Posterior cingulate gyrus (tissue), 11 donors: ENCODE measurements at regions of chr1 and their contacts with region 1.

Region 1: DNA sequence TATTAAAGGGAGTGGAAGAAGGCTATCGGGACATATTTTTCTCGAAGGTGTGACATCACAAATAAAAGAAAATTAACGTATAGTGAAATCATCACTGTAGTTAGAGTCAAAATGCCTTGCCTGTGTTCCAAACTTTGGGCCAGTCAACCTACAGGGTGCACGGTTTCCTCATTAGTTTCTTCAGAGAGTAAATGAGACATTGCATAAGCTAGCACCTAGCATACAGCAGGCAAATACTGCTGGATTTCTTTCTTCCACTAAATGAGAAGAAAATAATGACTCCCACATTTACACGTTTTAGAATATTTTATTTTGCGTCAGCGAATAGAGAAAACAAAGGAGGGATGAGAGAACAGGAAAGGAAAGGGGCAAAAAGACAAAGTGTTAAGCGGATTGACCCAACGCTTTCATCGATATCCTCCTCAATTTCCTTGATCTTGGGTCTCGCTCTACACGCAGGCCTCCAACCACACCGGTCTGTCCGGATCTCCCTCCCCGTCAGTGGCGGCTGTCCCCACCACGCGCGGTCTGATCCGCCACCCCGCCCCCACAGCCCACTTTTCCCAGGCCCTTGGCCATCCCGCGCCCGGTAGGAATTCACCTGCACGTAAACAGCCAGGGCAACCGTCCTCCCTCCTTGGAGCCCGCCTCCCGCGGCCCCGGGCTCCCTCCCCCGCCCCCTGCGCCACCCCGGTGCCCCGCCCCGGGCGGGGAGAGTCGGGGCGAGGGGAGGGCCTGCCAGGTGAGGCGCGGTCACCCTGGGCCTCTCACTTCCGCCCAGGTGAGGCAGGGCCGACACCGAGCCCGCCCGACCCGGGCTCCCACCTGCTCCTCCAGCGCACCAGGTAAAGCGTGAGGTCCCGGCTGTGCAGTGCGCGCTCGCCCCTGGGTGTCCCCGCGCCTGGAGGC is at the start of gene PATJ:
- DNase-seq: peak; percentile 32 to 92 (median 57)

Region 2: DNA sequence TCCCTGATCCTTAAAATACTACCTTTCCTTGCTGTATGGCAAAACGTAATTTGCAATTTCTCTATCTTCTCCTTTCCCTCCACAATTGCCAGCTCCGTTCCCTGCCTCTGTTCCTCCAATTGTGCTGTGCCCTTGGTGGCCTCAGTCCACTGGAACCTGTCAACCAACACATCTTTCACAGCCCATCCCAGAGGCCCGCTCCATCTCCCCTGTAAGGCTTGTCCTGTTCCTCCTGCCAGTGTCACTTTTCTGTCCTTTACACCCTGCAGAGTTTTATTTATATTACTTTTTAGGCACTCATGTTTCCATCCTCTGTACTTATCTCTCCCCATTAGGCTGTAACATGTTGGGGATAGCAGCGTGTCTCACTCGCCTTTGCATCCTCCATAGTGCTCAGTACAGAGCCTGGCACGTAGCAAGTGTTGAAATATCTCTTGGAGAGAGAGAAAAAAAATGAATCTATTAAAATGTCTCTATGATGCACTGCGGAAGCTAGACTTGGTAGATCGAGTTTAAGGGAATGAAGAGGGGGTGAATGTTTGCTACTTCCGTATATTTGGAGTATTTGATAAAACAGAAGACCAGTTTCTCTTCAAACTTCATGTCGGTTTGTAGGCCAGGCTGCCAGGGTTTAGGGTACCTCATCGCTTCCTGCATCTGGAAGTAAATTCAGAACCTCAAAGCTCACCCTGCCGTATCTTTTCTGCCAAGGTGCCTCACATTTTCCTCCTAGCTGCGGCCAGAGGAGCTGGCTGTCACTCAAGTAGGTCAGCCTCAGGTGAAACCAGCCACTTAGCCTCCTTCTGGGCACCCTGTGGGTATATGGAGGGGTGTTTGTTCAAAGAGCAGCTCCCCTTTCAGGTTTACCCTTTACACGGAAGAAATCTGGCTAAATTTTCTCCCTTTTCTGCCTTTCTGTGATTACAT is 320.8 kb before region 1 on chr1:
- intact Hi-C with region 1: no loop called
- DNase-seq: no peak

Region 3: DNA sequence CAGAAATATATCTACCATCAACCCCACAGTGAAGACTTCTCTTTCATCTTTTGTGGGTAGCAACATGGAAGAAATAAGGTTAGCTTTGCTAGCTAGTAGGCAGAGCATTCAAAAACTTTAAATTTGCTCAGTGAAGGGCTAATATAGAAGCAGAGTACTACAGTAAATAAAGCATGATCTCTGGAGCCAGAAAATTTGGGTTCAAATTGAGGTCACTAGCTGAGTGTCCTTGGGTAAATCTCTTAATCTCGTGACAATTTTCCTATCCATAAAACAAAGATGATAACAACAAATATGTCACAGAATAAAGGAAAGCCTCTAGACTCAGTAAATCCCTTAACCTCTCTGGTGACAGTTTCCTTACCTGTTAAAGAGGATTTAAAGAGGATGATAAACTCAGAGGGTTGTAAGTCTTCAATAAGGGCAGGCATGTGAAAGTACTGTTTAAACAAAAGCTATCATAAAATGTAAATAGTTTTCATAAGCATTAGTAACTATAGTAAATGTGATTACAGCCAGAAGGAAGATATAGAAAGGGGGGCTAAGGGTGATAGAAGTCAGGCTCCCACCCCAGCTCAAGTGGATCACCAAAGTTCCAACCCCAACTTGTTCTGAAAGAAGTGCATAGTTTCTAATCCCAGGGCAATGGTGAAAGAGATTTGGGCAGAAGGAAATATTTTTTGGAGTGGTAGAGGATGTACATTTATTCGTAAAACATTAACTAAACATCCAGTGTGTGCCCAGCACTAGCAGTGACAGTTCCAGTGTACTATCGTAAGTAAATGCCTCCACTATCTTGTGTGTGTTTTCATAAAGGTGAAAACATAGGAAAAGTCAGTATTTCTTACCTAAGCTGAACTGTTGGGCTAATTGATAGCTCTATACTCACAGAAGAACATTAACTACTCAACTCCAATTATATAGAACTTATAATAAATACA is 41.8 kb before region 1 on chr1:
- intact Hi-C with region 1: no loop called
- DNase-seq: no peak

Region 4: DNA sequence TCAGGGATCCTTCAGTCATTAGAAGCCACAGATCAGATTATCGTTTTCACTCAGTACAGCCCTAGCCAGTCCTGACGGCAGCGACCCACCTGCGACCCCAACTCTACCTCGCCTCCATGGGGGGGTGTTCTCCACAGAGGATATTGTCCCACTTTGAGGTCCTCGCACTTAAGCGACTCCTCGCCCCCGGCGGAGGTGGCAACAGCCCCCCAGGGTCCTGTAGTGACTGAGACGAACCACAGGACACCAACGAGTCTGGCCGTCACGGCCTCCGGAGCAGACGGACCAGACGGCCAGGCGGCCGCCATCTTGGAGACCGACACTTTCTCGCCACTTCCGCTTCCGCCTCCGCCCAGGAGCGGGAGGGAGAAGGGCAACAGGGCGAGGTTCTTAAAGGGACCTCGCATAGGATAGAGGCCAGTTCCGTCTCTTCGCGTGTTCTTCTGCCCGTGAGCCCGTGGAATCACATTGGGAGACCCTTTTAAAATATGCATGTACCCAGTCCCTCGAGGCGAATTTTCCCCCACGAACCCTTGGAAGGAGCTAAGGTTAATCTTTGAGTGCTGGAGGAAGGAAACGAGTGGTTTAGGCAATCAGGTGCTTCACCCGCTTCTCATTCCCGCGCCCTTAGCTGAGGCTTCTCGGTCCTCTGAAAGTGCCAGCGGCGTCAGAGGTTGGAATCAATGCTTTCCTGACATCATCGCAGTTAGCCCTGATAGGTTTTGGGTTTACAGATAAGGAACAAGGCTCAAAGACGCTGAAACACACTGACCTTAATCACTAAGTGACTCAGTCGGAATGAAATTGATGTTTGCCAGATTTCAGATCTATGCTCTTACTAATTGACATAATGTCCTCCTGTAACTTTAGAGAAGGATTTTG is 16.9 kb before region 1 on chr1 and contains the start of gene TM2D1:
- intact Hi-C with region 1: loop called (anchors 1 kb)
- DNase-seq: peak; percentile 86 to 99 (median 91)